ENCODE measurements at regions of chr1 and their contacts with region 1.

Region 1: DNA sequence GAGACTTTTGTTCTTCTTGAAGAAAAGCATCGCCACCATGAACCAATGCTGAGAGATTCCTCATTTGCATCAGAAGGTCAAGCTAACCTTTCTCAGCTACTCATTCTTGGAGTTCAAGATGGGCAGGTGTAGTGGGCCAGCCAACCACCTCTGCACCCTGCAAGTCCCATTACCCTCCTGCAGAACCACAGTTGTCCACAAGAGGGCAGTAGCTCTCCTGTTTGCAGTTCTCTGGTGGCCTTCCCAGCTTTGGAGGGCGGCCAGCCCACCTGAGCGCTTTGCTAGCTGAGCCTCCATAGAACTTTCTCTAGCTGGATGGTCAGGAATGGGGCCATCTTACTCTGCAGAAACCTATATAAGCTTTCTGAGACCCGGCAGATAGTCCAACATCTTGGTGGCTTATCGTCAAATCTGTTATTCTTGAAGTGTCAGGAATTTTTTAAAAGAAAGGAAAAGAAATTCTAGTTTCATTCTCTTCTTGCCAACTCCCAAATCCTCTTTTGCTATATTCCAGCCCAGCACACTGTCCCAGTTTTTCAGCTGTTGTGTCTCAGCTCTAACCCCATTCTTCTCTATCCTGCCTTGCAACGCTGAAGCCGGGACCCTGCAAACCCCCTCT is 11.0 kb upstream of the LMX1A start:
- DNase-seq: peak; percentile 88 to 91
- H3K4me3 ChIP-seq: no peak overlapping the region
- H3K27ac ChIP-seq: no peak overlapping the region
- H3K4me1 ChIP-seq: peaks cover 6 to 26% of the 10 kb centered on the region in 2 donors
- H3K27me3 ChIP-seq: no peaks in the 10 kb centered on the region
- CTCF ChIP-seq: peak; percentile 70 to 98 (median 90)
- POLR2A ChIP-seq: no peak

Region 2: DNA sequence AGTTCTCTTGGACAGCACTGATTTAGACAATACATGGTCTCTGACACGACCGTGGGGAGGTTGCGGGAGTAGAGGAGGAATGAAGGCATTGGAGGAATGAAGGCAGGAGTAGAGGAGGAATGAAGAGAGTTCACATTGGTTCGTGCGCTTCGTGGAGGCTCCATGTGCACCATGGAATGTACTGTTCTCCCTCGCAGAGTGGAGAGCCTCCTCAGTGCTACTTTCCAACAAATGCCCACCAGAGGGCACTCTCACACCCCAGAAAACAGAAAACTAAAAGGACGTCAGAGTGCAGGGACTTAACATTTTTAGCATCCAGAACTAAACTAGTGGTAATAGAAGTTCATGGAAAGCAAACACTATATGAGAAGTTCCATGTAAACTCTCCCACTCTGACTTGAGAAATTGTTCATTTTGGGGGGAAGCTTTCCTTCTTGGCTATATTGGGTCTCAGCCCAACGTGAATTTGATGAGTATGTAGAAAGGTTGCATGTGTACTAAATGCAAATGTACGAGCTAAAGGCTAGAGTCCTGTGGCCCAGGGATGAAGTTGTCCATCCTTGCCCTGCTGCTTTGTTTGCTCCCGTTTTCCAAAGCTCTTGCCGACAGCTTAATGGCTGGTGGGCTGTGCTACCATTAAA is 222.6 kb before region 1 on chr1:
- intact Hi-C with region 1: loop called (anchors 10 kb)
- DNase-seq: peak; percentile 60 to 72
- H3K4me3 ChIP-seq: no peak overlapping the region
- H3K27ac ChIP-seq: no peak overlapping the region
- H3K4me1 ChIP-seq: no peaks in the 10 kb centered on the region
- H3K27me3 ChIP-seq: no peaks in the 10 kb centered on the region
- CTCF ChIP-seq: peak; percentile 35 to 81 (median 63)
- POLR2A ChIP-seq: no peak

Measured in thyroid gland (tissue), 4 donors.